H1 (cell line): ENCODE measurements at regions of chr2 and their contacts with region 1.

Region 1: GRCh38 chr2:142130111-142131009 is 456 bp downstream of the LRP1B start:
- DNase-seq: peak; percentile 25 to 78
- H3K4me3 ChIP-seq: peak overlapping the region; percentile 65 to 75 (median 72)
- H3K27ac ChIP-seq: no peak overlapping the region
- H3K4me1 ChIP-seq: no peaks in the 10 kb centered on the region; a peak in 1 of 7 replicates
- H3K27me3 ChIP-seq: peaks cover 4 to 29% (median 22%) of the 10 kb centered on the region in 4 experiments
- CTCF ChIP-seq: no peak
- EP300 ChIP-seq: no peak
- POLR2A ChIP-seq: no peak
- RAD21 ChIP-seq: no peak

Region 2: GRCh38 chr2:142119347-142119746 is 11.0 kb before region 1 on chr2:
- CTCF ChIA-PET with region 1: interaction called, 5 read pairs
- POLR2A ChIA-PET with region 1: interaction called, 15 read pairs
- DNase-seq: no peak
- H3K4me3 ChIP-seq: no peak overlapping the region
- H3K27ac ChIP-seq: no peak overlapping the region
- H3K4me1 ChIP-seq: no peaks in the 10 kb centered on the region
- H3K27me3 ChIP-seq: no peaks in the 10 kb centered on the region
- CTCF ChIP-seq: no peak
- EP300 ChIP-seq: no peak
- POLR2A ChIP-seq: no peak
- RAD21 ChIP-seq: no peak

Region 3: GRCh38 chr2:142140434-142140845 is 10.1 kb after region 1 on chr2:
- CTCF ChIA-PET with region 1: interaction called, 16 read pairs
- POLR2A ChIA-PET with region 1: no interaction called
- DNase-seq: no peak
- H3K4me3 ChIP-seq: no peak overlapping the region
- H3K27ac ChIP-seq: no peak overlapping the region
- H3K4me1 ChIP-seq: no peaks in the 10 kb centered on the region
- H3K27me3 ChIP-seq: no peaks in the 10 kb centered on the region
- CTCF ChIP-seq: peak in 1 of 3 experiments; percentile 22; a peak in 1 of 4 replicates
- EP300 ChIP-seq: no peak
- POLR2A ChIP-seq: no peak
- RAD21 ChIP-seq: peak; percentile 54 to 76; a peak in 3 of 4 replicates

Region 4: GRCh38 chr2:142174176-142174575 is 43.8 kb after region 1 on chr2:
- CTCF ChIA-PET with region 1: no interaction called
- POLR2A ChIA-PET with region 1: no interaction called
- DNase-seq: no peak
- H3K4me3 ChIP-seq: no peak overlapping the region
- H3K27ac ChIP-seq: no peak overlapping the region
- H3K4me1 ChIP-seq: no peaks in the 10 kb centered on the region
- H3K27me3 ChIP-seq: no peaks in the 10 kb centered on the region
- CTCF ChIP-seq: no peak
- EP300 ChIP-seq: no peak
- POLR2A ChIP-seq: no peak
- RAD21 ChIP-seq: no peak